ENCODE measurements at regions of chr12 and their contacts with region 1.

Region 1: DNA sequence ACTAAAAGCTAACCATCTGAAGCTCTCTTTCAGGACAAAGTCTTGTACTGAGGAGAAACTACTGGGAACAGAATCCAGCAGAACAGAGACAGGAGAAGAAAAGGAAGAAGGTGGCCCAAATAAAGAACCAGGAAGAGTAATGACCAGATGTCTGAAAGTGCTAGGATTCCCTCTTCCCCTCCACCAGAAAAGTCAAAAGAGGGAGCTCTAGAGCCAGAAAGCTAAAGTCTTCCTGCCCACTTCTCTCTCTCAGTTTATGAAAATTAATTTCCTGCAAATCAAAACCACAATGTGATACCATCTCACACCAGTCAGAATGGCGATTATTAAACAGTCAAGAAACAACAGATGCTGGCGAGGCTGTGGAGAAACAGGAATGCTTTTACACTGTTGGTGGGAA is 47.2 kb downstream of the SPPL3 start:
- DNase-seq: no peak
- ATAC-seq: peak in 1 of 4 donors; percentile 30
- H3K4me3 ChIP-seq: no peak overlapping the region
- H3K27ac ChIP-seq: no peak overlapping the region
- H3K4me1 ChIP-seq: peaks cover 0 to 52% (median 27%) of the 10 kb centered on the region in 12 donors
- H3K27me3 ChIP-seq: no peaks in the 10 kb centered on the region
- CTCF ChIP-seq: peak in 7 of 12 donors; percentile 10 to 47 (median 31)
- POLR2A ChIP-seq: no peak

Region 2: GRCh38 chr12:120797677-120798642 is 59.0 kb before region 1 on chr12:
- intact Hi-C with region 1: no loop called
- DNase-seq: no peak
- ATAC-seq: no peak
- H3K4me3 ChIP-seq: no peak overlapping the region
- H3K27ac ChIP-seq: no peak overlapping the region
- H3K4me1 ChIP-seq: peaks cover 0 to 24% (median 3%) of the 10 kb centered on the region in 12 donors
- H3K27me3 ChIP-seq: no peaks in the 10 kb centered on the region
- CTCF ChIP-seq: no peak
- POLR2A ChIP-seq: no peak

Region 3: DNA sequence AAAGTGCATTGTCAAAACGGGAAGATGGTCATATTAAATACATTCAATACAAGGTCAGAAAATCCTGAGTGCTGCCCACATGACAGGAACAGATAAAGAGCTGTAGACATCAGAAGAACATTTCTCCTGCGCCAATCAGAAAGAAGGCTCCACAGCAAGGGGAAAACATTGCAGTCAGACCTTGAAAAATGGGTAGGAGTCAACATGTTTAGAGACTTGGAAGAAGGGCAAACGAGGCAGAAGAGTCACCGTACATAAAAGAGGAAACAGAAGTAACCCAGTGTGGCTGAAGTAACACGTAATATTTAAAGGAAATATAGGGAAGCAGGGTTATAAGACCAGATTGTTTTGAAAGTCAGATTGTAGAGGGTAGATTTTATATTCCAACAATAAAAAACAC is 35.3 kb after region 1 on chr12:
- intact Hi-C with region 1: loop called in 1 of 10 experiments (anchors 5 kb)
- DNase-seq: no peak
- ATAC-seq: peak in 2 of 4 donors; percentile 32 to 49
- H3K4me3 ChIP-seq: no peak overlapping the region
- H3K27ac ChIP-seq: peak overlapping the region in 10 of 12 donors; percentile 12 to 63 (median 30)
- H3K4me1 ChIP-seq: peaks cover 4 to 66% (median 20%) of the 10 kb centered on the region in 12 donors
- H3K27me3 ChIP-seq: no peaks in the 10 kb centered on the region
- CTCF ChIP-seq: no peak
- POLR2A ChIP-seq: no peak